HCT116 (cell line): ENCODE measurements at regions of chr1 and their contacts with region 1.

Region 1: DNA sequence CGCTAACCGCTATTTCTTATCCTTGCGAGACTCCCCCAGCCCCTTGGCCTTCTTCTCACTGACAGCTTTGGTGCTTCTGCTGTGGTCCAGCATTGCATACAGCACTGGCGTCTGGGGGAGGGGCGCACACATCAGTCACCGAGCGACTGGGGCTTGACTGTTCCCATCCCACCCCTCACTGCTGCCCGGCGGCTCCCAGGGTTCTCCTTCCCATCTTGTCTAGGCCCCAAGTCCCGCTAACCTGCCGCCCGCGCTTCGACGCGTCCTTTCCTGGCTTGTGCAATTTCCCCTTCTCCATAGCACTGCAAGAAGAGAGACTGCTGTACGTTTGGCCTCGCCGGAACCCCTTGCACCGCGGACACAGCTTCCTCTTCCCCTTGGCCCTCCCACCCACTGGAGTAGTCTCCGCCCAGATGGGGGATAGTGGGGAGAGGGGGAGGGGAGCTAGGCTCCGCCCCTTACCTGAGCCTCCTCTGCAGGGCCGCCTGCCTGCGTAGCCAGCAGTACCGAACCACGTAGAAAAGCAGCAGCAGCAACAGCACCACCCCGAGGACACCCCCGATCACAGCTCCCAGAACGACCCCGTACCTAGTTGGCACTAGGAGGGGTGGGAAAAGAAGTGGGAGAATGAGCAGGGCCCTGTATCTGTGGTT is 3.8 kb downstream of the MPZ start:
- DNase-seq: peak; percentile 80
- ATAC-seq: peak; percentile 99
- H3K4me3 ChIP-seq: peak overlapping the region; percentile 93 to 97
- H3K27ac ChIP-seq: peak overlapping the region; percentile 59; the same call in 1 of the 2 replicates
- H3K4me1 ChIP-seq: peaks cover 8 to 31% of the 10 kb centered on the region in 2 experiments; a peak in 3 of 4 replicates
- H3K27me3 ChIP-seq: no peaks in the 10 kb centered on the region
- CTCF ChIP-seq: peak; percentile 30 to 64 (median 53); a peak in 5 of 6 replicates
- POLR2A ChIP-seq: no peak
- RAD21 ChIP-seq: peak; percentile 47

Region 2: DNA sequence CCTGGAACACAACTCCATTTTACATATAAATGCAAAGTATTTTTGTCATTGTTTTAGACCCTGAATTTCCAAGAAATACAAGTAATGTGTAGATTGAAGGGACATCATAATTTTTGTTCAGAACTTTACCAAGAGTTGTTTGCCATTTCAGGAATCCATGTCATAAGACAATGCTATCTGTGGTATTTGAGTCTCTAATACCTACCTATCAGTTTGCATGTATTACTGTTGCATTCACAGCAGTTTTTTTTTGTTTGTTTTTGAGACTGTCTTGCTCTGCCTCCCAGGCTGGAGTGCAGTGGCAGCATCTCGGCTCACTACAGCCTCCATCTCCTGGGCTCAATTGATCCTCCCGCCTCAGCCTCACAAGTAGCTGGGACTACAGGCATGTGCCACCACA is 13.4 kb before region 1 on chr1:
- CTCF ChIA-PET with region 1: interaction called, 16 read pairs
- POLR2A ChIA-PET with region 1: no interaction called
- RAD21 ChIA-PET with region 1: no interaction called
- intact Hi-C with region 1: no loop called
- DNase-seq: no peak
- ATAC-seq: no peak
- H3K4me3 ChIP-seq: no peak overlapping the region
- H3K27ac ChIP-seq: no peak overlapping the region
- H3K4me1 ChIP-seq: 0 out of 4 replicates have a peak, but pooled peaks cover 0 to 2% of the 10 kb centered on the region in 2 experiments
- H3K27me3 ChIP-seq: no peaks in the 10 kb centered on the region
- CTCF ChIP-seq: no peak
- POLR2A ChIP-seq: no peak
- RAD21 ChIP-seq: no peak